ENCODE measurements at regions of chr6 and their contacts with region 1.

Region 1: GRCh38 chr6:25490018-25490801 is 161.8 kb upstream of the SCGN start:
- DNase-seq: peak; percentile 82
- H3K4me3 ChIP-seq: no peak overlapping the region
- H3K27ac ChIP-seq: peak overlapping the region in 1 of 4 donors; percentile 42
- H3K4me1 ChIP-seq: peaks cover 0 to 9% (median 0%) of the 10 kb centered on the region in 4 donors
- H3K27me3 ChIP-seq: no peaks in the 10 kb centered on the region
- CTCF ChIP-seq: peak; percentile 59 to 83 (median 80)
- EP300 ChIP-seq: no peak
- POLR2A ChIP-seq: no peak

Region 2: DNA sequence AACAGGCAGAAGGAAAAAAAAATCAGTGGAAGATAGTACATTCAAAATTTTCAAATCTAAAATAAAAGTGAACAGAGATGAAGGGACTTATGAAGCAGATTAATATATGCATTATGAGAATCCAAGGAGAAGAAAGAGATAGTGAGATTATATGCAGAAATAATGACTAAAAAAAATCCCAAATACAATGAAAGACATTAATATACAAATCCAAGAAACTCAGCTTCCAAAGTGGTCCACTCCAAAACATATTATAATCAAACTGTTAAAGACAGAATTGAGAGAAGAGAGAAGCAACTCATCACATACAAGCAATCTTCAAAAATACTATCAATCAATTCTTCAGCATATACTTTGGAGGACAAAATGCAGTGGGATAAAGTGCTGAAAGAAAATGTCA is 284.6 kb before region 1 on chr6:
- in situ Hi-C with region 1: no loop called
- intact Hi-C with region 1: no loop called
- DNase-seq: no peak
- H3K4me3 ChIP-seq: no peak overlapping the region
- H3K27ac ChIP-seq: no peak overlapping the region
- H3K4me1 ChIP-seq: no peaks in the 10 kb centered on the region
- H3K27me3 ChIP-seq: no peaks in the 10 kb centered on the region
- CTCF ChIP-seq: no peak
- EP300 ChIP-seq: no peak
- POLR2A ChIP-seq: no peak

Region 3: DNA sequence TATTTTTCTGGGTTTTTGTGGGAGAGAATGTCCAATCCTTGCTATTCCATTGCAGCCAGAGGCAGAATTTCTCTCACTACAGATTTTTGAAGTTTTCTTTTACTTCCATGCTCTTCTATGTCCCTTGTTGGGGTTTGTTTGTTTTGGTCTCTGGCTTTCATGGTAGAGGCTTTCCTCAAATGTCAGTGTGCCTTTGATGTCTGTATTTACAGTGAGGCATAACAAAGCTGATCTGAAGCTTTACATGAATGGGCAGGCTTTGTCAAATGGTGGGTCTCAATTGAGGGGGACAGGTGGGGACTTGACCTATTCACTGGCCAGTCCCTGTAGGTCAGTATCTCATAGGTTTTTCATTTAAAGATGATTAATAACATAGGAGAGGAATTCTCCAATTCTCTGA is 219.7 kb before region 1 on chr6:
- in situ Hi-C with region 1: loop called in 3 of 4 experiments (anchors 5 kb)
- intact Hi-C with region 1: no loop called
- DNase-seq: no peak
- H3K4me3 ChIP-seq: no peak overlapping the region
- H3K27ac ChIP-seq: no peak overlapping the region
- H3K4me1 ChIP-seq: peaks cover 0 to 12% (median under 1%) of the 10 kb centered on the region in 4 donors
- H3K27me3 ChIP-seq: peaks cover 3% of the 10 kb centered on the region
- CTCF ChIP-seq: no peak
- EP300 ChIP-seq: no peak
- POLR2A ChIP-seq: no peak

Region 4: DNA sequence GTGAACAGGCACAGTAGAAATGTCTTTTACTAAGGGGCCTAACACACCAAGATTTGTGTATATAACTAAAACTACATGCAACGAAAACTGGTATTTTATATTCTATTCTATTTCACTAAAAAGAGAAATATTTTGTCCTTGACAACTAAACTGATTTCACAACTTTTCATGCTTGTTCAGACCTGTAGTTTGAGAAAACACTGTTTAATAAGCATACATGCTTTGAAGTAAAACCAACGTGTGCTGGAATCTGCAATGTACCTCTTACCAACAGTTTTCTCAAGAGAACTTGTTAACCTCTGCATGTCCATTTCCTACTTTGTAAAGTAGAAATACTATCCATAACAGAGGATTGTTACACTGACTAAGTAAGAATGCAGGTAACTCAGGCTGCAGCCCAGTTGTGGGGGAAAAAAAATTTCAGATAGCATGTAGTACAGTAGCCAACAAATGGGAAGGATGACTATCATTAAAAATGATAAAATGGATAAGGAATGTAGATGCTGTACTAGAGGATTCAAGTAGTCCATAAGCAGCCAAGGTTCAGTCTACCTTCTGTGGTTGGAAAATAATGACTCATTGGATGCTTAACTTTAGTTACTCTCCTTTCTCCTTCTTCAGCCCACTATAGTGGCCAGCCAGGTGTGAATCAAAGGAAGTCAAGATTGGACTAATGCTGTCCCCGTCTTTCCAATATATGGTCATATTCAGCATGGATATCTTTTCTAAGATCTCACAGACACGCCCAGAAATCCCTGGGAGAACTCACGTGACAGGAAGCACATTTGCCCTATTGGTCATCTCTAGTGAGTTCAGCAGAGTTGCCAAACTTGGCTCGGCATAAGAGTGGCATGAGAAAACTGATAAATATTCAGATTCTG is 662.3 kb after region 1 on chr6:
- in situ Hi-C with region 1: no loop called
- intact Hi-C with region 1: no loop called
- DNase-seq: no peak
- H3K4me3 ChIP-seq: no peak overlapping the region
- H3K27ac ChIP-seq: no peak overlapping the region
- H3K4me1 ChIP-seq: peaks cover 0 to 17% (median 3%) of the 10 kb centered on the region in 4 donors
- H3K27me3 ChIP-seq: no peaks in the 10 kb centered on the region
- CTCF ChIP-seq: no peak
- EP300 ChIP-seq: no peak
- POLR2A ChIP-seq: no peak